ENCODE measurements at regions of chr1 and their contacts with region 1.

Region 1: DNA sequence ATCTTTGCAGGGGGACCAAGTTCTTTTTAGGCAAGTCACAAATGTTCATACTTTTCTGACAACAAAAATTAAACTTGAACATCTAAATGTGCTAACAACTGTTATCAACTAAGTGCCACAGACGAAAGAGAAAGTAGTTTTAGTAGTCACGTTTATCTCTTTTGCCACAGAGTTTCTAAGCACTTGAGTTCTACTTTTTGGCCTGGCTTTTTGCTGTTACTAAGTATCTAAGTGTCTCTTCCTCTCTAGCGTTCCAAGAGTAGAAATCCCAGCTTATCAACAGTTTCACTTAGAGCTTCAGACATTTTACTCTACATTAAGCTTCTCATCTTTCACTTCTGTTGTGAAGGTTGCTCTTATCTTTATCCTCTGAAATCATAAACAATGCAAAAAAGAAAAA is 34.2 kb downstream of the GATAD2B start:
- DNase-seq: no peak
- H3K4me3 ChIP-seq: no peak overlapping the region
- H3K27me3 ChIP-seq: no peaks in the 10 kb centered on the region
- CTCF ChIP-seq: no peak

Region 2: DNA sequence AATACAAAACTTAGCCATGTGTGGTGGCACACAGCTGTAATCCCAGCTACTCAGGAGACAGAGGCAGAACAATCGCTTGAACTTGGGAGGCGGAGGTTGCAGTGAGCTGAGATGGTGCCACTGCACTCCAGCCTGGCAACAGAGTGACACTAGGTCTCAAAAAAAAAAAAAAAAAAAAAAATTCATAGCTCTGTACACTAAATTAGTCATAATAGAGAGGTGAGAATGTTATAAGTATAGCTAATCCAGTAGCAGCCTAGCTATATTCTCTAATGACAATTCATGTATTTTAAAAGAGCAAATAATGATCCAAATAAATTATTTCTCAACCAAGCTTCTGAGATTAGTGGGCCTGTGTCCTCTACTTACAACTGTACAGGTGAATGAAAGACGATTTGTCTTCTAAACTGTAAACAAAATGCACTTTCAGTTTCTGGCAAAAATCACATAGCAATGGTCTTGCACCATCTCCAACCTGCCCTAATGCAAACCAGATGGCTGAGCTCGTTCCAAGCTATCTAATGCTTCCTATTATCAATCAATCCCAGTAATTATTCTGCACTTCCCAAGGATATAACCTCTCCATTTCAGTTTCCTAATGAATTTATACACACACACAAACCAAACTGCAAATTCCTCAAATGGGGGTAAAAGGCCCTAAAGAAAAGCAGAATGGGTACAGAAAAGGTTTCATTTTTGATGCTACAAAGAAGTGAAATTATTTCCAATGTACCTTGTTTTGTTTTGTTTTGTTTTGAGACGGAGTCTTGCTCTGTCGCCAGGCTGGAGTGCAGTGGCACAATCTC is 22.3 kb before region 1 on chr1:
- CTCF ChIA-PET with region 1: no interaction called
- POLR2A ChIA-PET with region 1: interaction called, 10 read pairs
- DNase-seq: peak; percentile 18
- H3K4me3 ChIP-seq: no peak overlapping the region
- H3K27me3 ChIP-seq: no peaks in the 10 kb centered on the region
- CTCF ChIP-seq: no peak